Natural killer cell (primary cell): ENCODE measurements at regions of chr2 and their contacts with region 1.

Region 1: DNA sequence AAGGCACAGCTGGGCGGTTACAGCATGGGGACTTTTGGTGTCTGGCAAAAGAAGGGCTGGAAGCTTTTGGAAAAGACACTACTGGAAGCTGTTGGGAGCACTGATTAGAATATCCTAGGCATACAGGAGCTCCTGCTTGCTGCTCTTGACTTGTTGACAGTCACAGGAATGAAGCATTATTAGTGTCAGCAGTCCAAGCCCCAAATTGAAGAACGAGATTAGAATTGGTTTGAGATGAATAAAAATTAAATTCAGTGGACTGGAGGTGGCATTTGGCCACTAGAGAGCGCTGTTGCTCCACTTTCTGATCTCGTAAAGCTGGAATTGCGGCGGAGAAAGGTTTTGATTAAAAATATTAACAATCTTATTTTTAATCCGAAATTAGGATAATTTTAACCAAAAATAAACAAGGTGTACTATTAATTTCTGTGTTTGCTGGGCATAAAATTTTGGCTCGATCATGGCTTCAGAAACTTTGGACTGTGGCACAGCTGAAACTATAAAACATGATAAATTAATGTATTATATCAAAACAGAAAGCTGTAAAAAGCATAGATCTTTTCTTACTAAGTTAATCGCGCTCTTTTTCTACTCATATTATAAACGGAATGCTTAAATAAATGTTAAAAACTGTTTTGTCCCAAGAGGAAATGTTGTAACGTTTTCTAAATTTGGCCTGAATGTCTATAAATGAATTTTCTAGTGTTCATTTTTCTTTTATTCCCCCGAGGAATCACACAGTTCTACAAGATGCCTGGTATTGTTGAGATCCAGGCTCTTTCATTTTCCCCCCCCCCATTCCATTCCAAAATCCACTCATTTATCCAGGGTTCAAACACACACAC is 2.4 kb upstream of the HOXD8 start:
- DNase-seq: peak; percentile 57 to 87
- ATAC-seq: peak in 1 of 3 donors; percentile 32
- H3K4me3 ChIP-seq: no peak overlapping the region
- H3K4me3 Mint-ChIP-seq: peak overlapping the region; percentile 40
- H3K27ac ChIP-seq: no peak overlapping the region
- H3K27ac Mint-ChIP-seq: peak overlapping the region in 1 of 2 donors; percentile 18
- H3K4me1 ChIP-seq: peaks cover 26% of the 10 kb centered on the region
- H3K4me1 Mint-ChIP-seq: peaks cover 22 to 27% of the 10 kb centered on the region in 2 donors
- H3K27me3 ChIP-seq: peaks cover 82% of the 10 kb centered on the region
- H3K27me3 Mint-ChIP-seq: peaks cover 69 to 75% of the 10 kb centered on the region in 2 donors
- CTCF ChIP-seq: peak; percentile 93

Region 2: DNA sequence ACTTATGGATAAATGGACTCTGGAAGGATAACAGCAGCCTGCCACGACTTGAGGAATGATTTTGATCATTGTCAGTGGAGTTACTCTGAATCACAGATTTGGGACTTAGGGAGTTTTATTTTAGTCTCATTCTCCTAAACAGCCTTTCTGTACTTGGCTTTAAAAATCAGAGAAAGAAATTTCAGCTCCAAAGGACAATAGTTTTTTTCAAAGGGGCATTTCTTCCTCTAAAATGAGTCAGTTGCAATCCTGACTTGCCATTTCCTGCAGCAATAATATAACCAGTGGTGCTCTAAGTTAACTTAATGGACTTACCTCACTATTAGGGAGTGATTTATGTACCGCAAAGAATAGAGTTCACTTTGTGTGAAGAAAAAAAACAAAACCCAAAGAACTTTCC is 107.0 kb after region 1 on chr2:
- intact Hi-C with region 1: no loop called
- DNase-seq: no peak
- ATAC-seq: no peak
- H3K4me3 ChIP-seq: no peak overlapping the region
- H3K4me3 Mint-ChIP-seq: no peak overlapping the region
- H3K27ac ChIP-seq: no peak overlapping the region
- H3K27ac Mint-ChIP-seq: no peak overlapping the region
- H3K4me1 ChIP-seq: no peaks in the 10 kb centered on the region
- H3K4me1 Mint-ChIP-seq: no peaks in the 10 kb centered on the region
- H3K27me3 ChIP-seq: no peaks in the 10 kb centered on the region
- H3K27me3 Mint-ChIP-seq: peaks cover 26 to 45% of the 10 kb centered on the region in 2 donors
- CTCF ChIP-seq: no peak

Region 3: DNA sequence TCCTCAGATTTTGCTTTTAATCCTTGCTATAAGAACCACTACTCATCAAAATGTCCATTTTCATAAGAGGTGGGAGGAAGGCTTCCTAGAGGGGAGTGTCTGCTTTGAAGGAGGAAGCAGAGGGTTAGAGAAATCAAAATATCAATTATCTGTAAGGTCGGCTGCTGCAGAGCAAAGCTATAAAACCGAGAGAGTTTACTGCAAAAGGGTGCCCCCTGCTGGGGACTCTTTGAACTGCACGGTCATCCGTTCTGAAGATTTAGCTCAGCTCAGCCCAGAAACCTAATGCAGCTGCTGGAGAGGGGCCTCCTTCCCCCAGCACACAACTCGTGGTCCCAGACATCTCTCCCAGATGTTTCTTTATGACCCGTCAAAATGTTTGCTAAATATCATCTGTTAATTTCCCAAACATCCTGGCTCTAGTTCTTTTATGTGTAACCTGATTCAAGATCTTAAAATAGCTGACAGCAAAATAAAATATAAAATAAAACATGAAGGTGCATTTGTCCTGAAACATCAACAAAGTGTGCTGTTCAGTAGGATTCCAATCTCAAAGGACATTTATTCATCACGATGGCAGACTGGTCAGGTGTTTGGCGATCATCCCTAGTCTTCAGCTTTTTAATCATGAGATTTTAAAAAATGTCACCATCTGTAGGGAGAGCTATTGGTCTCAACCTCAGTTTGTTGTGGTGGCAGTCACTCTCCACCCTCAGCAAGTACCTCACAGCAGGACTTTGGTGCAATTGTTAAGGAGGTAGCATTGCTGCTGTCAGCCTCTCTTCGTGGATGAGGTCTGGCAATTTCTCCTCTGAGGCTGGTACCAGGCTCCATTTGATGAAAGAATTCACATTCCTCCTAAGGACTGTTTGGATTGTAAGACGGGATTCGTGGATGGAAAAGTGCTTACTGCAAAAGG is 328.0 kb after region 1 on chr2:
- intact Hi-C with region 1: loop called (anchors 1 kb)
- DNase-seq: peak; percentile 72 to 80
- ATAC-seq: peak; percentile 76 to 87 (median 80)
- H3K4me3 ChIP-seq: no peak overlapping the region
- H3K4me3 Mint-ChIP-seq: no peak overlapping the region
- H3K27ac ChIP-seq: no peak overlapping the region
- H3K27ac Mint-ChIP-seq: no peak overlapping the region
- H3K4me1 ChIP-seq: no peaks in the 10 kb centered on the region
- H3K4me1 Mint-ChIP-seq: no peaks in the 10 kb centered on the region
- H3K27me3 ChIP-seq: peaks cover 8% of the 10 kb centered on the region
- H3K27me3 Mint-ChIP-seq: peaks cover 29 to 38% of the 10 kb centered on the region in 2 donors
- CTCF ChIP-seq: peak; percentile 97

Region 4: GRCh38 chr2:176638167-176639015 is 511.2 kb after region 1 on chr2:
- intact Hi-C with region 1: loop called (anchors 5 kb)
- DNase-seq: peak; percentile 27 to 74
- ATAC-seq: peak; percentile 77 to 94 (median 79)
- H3K4me3 ChIP-seq: peak overlapping the region; percentile 33
- H3K4me3 Mint-ChIP-seq: peak overlapping the region; percentile 79
- H3K27ac ChIP-seq: no peak overlapping the region
- H3K27ac Mint-ChIP-seq: no peak overlapping the region
- H3K4me1 ChIP-seq: peaks cover 7% of the 10 kb centered on the region
- H3K4me1 Mint-ChIP-seq: peaks cover 5 to 12% of the 10 kb centered on the region in 2 donors
- H3K27me3 ChIP-seq: peaks cover 44% of the 10 kb centered on the region
- H3K27me3 Mint-ChIP-seq: peaks cover 34 to 70% of the 10 kb centered on the region in 2 donors
- CTCF ChIP-seq: peak; percentile 62

Region 5: DNA sequence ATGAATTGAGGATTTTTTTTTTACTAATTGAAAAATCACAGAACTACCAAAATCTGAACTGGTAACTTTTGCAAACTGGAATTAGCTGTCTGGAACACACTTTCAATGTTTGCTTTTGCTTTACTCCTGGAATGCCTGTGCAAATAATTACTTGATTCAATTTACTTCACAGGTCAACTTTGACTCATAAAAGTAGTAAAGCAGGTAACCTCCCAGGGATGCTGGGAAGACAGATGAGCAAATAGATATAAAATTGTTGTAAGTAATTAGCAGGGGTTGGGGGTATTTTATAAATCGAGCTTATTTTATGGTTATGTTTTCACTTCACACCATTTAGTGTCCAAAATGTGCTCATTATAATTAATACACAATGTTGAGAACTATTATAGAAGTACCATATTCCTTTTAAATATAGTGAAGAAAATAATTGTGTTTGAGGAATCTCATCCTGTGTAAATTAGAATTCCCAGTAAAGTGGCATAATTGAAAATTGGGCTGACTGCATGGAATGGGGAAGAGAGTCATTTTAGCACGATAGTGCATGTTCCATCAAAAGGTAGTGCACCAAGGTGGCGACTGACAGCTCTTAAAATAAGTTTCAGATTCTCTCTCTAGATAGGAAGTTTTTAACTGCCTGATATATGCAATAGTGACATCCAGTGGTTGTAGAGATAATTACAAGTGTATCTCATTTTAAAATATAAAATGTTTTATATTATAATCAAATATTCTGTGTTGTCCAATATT is 687.3 kb after region 1 on chr2:
- intact Hi-C with region 1: loop called (anchors 5 kb)
- DNase-seq: peak in 1 of 2 donors; percentile 61
- ATAC-seq: peak; percentile 73 to 79 (median 76)
- H3K4me3 ChIP-seq: no peak overlapping the region
- H3K4me3 Mint-ChIP-seq: no peak overlapping the region
- H3K27ac ChIP-seq: no peak overlapping the region
- H3K27ac Mint-ChIP-seq: no peak overlapping the region
- H3K4me1 ChIP-seq: no peaks in the 10 kb centered on the region
- H3K4me1 Mint-ChIP-seq: peaks cover 8 to 12% of the 10 kb centered on the region in 2 donors
- H3K27me3 ChIP-seq: no peaks in the 10 kb centered on the region
- H3K27me3 Mint-ChIP-seq: no peaks in the 10 kb centered on the region
- CTCF ChIP-seq: peak; percentile 85